Heart right ventricle (tissue), 16 donors: ENCODE measurements at regions of chr10 and their contacts with region 1.

Region 1: DNA sequence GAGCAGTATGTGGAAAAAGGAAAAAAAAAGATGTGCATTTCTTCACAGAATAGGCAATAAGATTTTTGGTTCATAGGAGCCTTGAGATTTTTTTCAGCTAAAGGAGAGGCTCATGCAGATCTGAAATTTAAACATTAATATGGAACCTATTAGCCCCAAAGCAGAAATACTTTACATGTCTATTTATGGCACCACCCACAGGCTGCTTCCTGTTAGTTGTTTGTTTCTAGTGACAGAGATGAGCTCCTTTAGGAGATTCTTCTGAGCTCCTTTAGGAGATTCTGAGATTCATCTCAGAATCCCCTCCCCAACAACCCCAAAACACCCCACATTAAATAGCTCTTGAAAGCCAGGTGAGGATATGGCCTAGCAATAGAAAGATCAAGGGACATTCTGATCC is 27.9 kb upstream of the HPS1 start:
- DNase-seq: no peak
- ATAC-seq: no peak
- H3K4me3 ChIP-seq: no peak overlapping the region
- H3K27ac ChIP-seq: no peak overlapping the region
- H3K4me1 ChIP-seq: no peaks in the 10 kb centered on the region
- H3K27me3 ChIP-seq: no peaks in the 10 kb centered on the region
- CTCF ChIP-seq: no peak

Region 2: GRCh38 chr10:97869091-97870042 is 605.3 kb before region 1 on chr10:
- intact Hi-C with region 1: no loop called
- DNase-seq: peak; percentile 75 to 82
- ATAC-seq: peak; percentile 90 to 98 (median 95)
- H3K4me3 ChIP-seq: no peak overlapping the region
- H3K27ac ChIP-seq: no peak overlapping the region
- H3K4me1 ChIP-seq: peaks cover 0 to 13% (median 9%) of the 10 kb centered on the region in 9 donors
- H3K27me3 ChIP-seq: peaks cover 0 to 36% (median 19%) of the 10 kb centered on the region in 7 donors
- CTCF ChIP-seq: peak; percentile 46 to 83 (median 74)

Region 3: GRCh38 chr10:99234791-99235657 is 760.4 kb after region 1 on chr10:
- intact Hi-C with region 1: loop called in 1 of 10 experiments (anchors 5 kb)
- DNase-seq: no peak
- ATAC-seq: peak in 1 of 8 donors; percentile 28
- H3K4me3 ChIP-seq: peak overlapping the region in 9 of 10 donors; percentile 14 to 58 (median 52)
- H3K27ac ChIP-seq: no peak overlapping the region
- H3K4me1 ChIP-seq: peaks cover 0 to 42% (median 25%) of the 10 kb centered on the region in 9 donors
- H3K27me3 ChIP-seq: peaks cover 6 to 99% (median 98%) of the 10 kb centered on the region in 7 donors
- CTCF ChIP-seq: no peak

Region 4: GRCh38 chr10:99370993-99371392 is 896.4 kb after region 1 on chr10:
- intact Hi-C with region 1: loop called in 1 of 10 experiments (anchors 10 kb)
- DNase-seq: no peak
- ATAC-seq: peak in 1 of 8 donors; percentile 45
- H3K4me3 ChIP-seq: no peak overlapping the region
- H3K27ac ChIP-seq: no peak overlapping the region
- H3K4me1 ChIP-seq: peaks cover 0 to 9% (median 0%) of the 10 kb centered on the region in 9 donors
- H3K27me3 ChIP-seq: peaks cover 0 to 57% (median 8%) of the 10 kb centered on the region in 7 donors
- CTCF ChIP-seq: peak in 8 of 9 donors; percentile 21 to 56 (median 44)